ENCODE measurements at regions of chr5 and their contacts with region 1.

Region 1: DNA sequence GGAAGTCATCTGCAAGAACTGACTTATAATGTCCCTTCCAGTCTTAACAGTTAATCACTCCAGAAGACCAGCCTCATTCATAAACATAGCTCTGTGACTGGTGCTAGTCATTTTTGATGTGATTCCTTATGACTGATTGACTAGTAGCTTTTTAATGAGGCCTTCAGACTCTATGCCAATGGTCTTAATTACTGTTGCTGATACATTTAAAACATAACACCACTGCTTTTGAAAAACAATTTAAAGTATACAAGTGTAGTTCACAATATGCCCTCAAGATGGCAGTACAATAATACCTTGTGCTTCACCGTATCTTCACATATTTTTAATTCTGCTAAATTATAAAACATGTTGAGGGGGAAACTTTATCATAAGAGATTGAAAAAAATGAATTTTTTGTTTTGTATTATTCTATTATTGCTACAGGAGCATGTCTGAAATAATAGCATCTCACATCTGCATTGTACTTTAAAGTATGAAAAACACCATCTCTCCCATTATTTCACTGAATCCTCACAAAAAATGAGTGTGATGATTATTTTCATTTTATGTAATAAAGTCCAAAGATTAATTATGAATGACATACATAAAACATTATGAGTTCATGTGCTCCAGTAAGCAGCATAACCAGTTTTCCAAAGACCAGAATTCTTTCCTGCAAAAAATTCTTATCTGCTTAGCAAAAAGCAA is 55.2 kb upstream of the SHISAL2B start:
- DNase-seq: no peak
- ATAC-seq: no peak

Region 2: GRCh38 chr5:64784451-64785025 is 149.4 kb after region 1 on chr5:
- intact Hi-C with region 1: loop called (anchors 1 kb)
- DNase-seq: peak; percentile 53
- ATAC-seq: no peak

Measured in Right ventricle myocardium inferior (tissue), 1 donor.